ENCODE measurements at regions of chr16 and their contacts with region 1.

Region 1: DNA sequence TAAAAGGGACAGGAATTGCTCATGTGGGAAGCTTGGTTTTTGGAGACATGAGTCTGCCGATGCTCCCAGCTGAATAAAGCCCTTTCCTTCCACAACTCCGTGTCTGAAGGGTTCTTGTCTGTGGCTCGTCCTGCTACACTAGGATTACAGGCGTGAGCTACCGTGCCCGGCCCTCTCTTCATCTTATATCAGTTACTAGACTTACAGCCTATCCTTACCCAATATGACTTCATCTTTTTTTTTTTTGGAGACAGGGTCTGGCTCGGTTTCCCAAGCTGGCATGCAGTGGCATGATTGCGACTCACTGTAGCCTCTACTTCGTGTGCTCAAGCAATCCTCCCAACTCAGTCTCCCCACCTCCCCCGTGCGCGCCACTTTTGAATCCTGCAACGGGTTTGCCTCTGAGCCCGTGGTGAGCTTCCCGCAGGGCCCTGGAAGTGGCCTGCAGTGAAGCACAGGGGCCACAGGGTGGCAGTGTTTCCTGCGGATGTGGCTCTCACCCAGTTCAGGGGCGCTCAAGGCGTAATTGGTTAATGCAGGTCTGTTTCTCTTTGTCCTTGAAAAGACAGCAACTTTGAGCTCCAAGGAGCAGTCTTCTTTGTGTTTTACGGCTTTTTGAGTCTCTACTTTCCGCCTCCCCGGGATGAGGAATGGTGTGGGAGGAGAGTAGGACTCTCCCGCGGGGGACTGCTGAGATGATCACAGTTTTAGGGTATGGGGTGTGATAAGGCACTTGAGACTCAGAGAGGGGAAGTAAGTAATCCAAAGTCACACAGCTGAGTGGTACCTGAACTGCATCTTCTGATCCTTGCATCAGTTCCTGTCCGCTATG is 22.7 kb upstream of the GPRC5B start:
- DNase-seq: peak in 1 of 2 donors; percentile 71
- H3K4me3 ChIP-seq: no peak overlapping the region
- H3K27ac ChIP-seq: no peak overlapping the region
- H3K4me1 ChIP-seq: no peaks in the 10 kb centered on the region
- H3K27me3 ChIP-seq: no peaks in the 10 kb centered on the region
- CTCF ChIP-seq: peak; percentile 64 to 91 (median 89)

Region 2: GRCh38 chr16:19835968-19836421 is 71.4 kb before region 1 on chr16:
- intact Hi-C with region 1: no loop called
- DNase-seq: no peak
- H3K4me3 ChIP-seq: no peak overlapping the region
- H3K27ac ChIP-seq: no peak overlapping the region
- H3K4me1 ChIP-seq: no peaks in the 10 kb centered on the region
- H3K27me3 ChIP-seq: no peaks in the 10 kb centered on the region
- CTCF ChIP-seq: no peak

Region 3: GRCh38 chr16:20383106-20384029 is 476.0 kb after region 1 on chr16:
- intact Hi-C with region 1: loop called (anchors 2 kb)
- DNase-seq: peak in 1 of 2 donors; percentile 75
- H3K4me3 ChIP-seq: no peak overlapping the region
- H3K27ac ChIP-seq: no peak overlapping the region
- H3K4me1 ChIP-seq: peaks cover 0 to 7% of the 10 kb centered on the region in 2 donors
- H3K27me3 ChIP-seq: peaks cover 4% of the 10 kb centered on the region
- CTCF ChIP-seq: peak; percentile 24 to 84 (median 83)